ENCODE measurements at regions of chr10 and their contacts with region 1.

Region 1: DNA sequence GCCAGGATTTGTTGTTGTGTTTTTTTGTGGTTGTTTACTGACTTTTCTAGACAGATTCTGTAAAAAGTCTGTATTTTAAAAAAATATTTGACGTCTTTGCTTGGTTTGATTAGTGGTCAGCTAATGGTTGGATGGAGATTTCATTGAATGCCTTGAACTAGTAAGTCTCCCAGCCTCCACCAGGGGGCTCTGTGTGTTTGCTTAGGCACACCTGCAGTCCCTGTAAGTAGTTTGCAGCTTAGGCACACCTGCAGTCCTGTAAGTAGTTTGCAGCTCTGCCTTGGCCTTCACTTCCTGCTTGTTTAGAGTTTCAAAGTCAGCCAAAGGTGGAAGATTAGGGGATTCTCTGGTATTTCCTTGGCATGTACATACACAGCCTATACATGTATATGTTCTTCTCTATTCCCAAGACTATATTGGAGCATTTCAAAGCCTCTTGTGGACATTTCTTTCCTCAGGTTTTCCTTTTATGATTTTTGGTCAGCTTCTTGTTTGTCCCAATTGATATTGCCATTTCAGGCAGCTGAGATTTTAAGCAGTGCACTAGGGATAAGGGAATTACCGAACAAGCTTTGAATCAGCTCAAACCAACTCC is 101.6 kb downstream of the CCSER2 start:
- DNase-seq: peak; percentile 31
- ATAC-seq: peak; percentile 99
- H3K4me3 ChIP-seq: no peak overlapping the region
- H3K27ac ChIP-seq: no peak overlapping the region
- H3K4me1 ChIP-seq: no peaks in the 10 kb centered on the region
- H3K27me3 ChIP-seq: no peaks in the 10 kb centered on the region
- CTCF ChIP-seq: peak; percentile 73 to 88 (median 77)
- EP300 ChIP-seq: no peak
- POLR2A ChIP-seq: no peak
- RAD21 ChIP-seq: peak; percentile 54

Region 2: GRCh38 chr10:84264611-84265141 is 165.3 kb before region 1 on chr10:
- CTCF ChIA-PET with region 1: interaction called, 27 read pairs
- POLR2A ChIA-PET with region 1: no interaction called
- RAD21 ChIA-PET with region 1: interaction called, 6 read pairs
- SMC1A ChIA-PET with region 1: interaction called, 6 read pairs
- in situ Hi-C with region 1: no loop called
- intact Hi-C with region 1: loop called (anchors 2 kb)
- DNase-seq: no peak
- ATAC-seq: peak; percentile 94
- H3K4me3 ChIP-seq: no peak overlapping the region
- H3K27ac ChIP-seq: no peak overlapping the region
- H3K4me1 ChIP-seq: no peaks in the 10 kb centered on the region
- H3K27me3 ChIP-seq: no peaks in the 10 kb centered on the region; a peak in 2 of 4 replicates
- CTCF ChIP-seq: peak; percentile 94 to 98 (median 97)
- EP300 ChIP-seq: no peak
- POLR2A ChIP-seq: no peak
- RAD21 ChIP-seq: peak; percentile 87

Region 3: GRCh38 chr10:84360637-84361365 is 69.2 kb before region 1 on chr10:
- CTCF ChIA-PET with region 1: no interaction called
- POLR2A ChIA-PET with region 1: no interaction called
- RAD21 ChIA-PET with region 1: no interaction called
- SMC1A ChIA-PET with region 1: no interaction called
- in situ Hi-C with region 1: no loop called
- intact Hi-C with region 1: no loop called
- DNase-seq: no peak
- ATAC-seq: no peak
- H3K4me3 ChIP-seq: no peak overlapping the region
- H3K27ac ChIP-seq: no peak overlapping the region
- H3K4me1 ChIP-seq: no peaks in the 10 kb centered on the region
- H3K27me3 ChIP-seq: no peaks in the 10 kb centered on the region
- CTCF ChIP-seq: no peak
- EP300 ChIP-seq: no peak
- POLR2A ChIP-seq: no peak
- RAD21 ChIP-seq: no peak

Region 4: GRCh38 chr10:84375011-84375410 is 55.0 kb before region 1 on chr10:
- CTCF ChIA-PET with region 1: interaction called, 13 read pairs
- POLR2A ChIA-PET with region 1: no interaction called
- RAD21 ChIA-PET with region 1: interaction called, 3 read pairs
- SMC1A ChIA-PET with region 1: interaction called, 7 read pairs
- in situ Hi-C with region 1: no loop called
- intact Hi-C with region 1: loop called (anchors 5 kb)
- DNase-seq: peak; percentile 34
- ATAC-seq: peak; percentile 78
- H3K4me3 ChIP-seq: no peak overlapping the region
- H3K27ac ChIP-seq: no peak overlapping the region
- H3K4me1 ChIP-seq: no peaks in the 10 kb centered on the region
- H3K27me3 ChIP-seq: no peaks in the 10 kb centered on the region
- CTCF ChIP-seq: peak; percentile 58 to 69 (median 60)
- EP300 ChIP-seq: no peak
- POLR2A ChIP-seq: no peak
- RAD21 ChIP-seq: peak; percentile 77

Region 5: DNA sequence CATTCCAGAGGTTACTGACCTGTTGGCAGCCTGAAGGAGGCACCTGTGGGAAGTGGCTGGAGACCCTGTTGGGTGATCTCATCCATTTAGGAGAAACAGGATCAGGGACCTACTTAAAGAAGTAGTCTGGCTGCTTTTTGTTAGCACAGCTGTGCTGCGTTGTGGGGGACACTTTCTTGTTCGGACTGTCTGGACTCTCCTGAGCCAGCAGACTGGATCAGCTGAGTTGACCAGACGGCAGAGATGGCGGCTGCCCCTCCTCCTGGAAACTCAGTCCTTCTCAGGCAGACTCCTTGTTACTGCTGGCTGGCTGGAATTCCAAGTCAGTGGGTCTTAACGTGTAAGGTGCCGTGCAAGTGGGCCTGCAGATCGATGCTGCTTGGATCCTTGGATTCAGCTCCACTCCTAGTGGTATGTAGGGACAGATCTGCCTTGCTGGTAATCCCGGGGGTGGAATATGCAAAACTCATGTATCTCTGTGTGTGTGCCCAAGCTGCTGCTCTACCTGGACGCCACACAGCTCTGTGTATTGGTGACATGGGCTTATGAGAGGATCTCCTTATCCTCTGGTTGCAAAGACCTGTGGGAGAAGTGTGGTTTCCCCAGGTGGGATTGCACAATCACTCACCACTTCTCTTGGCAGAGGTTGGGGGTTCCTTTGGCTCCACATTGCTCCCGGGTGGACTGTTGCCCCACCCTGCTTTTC is 14.3 kb before region 1 on chr10:
- CTCF ChIA-PET with region 1: interaction called, 13 read pairs
- POLR2A ChIA-PET with region 1: interaction called, 3 read pairs
- RAD21 ChIA-PET with region 1: no interaction called
- SMC1A ChIA-PET with region 1: interaction called, 4 read pairs
- in situ Hi-C with region 1: no loop called
- intact Hi-C with region 1: no loop called
- DNase-seq: no peak
- ATAC-seq: no peak
- H3K4me3 ChIP-seq: no peak overlapping the region
- H3K27ac ChIP-seq: no peak overlapping the region
- H3K4me1 ChIP-seq: no peaks in the 10 kb centered on the region
- H3K27me3 ChIP-seq: no peaks in the 10 kb centered on the region
- CTCF ChIP-seq: no peak
- EP300 ChIP-seq: no peak
- POLR2A ChIP-seq: no peak
- RAD21 ChIP-seq: no peak

Region 6: DNA sequence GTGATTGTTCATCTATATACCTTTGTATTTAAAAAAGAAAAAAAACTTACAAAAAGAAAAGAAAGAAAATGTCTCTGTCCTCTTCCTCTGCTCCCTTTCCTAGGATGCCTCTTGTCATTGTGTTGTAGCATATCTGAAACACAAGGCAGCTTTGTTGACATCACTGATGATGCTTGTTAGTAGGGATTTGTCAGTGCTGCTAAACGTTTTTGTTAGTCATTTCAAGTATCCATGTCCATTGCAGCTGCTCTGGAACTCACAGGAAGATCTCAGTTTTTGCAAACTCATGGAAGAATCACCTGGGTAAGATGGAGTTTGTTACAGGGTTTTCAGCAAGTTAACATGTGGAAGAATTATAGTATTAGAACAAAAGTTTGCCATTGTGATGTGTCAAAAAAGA is 22.0 kb after region 1 on chr10:
- CTCF ChIA-PET with region 1: interaction called, 14 read pairs
- POLR2A ChIA-PET with region 1: no interaction called
- RAD21 ChIA-PET with region 1: no interaction called
- SMC1A ChIA-PET with region 1: no interaction called
- in situ Hi-C with region 1: no loop called
- intact Hi-C with region 1: no loop called
- DNase-seq: no peak
- ATAC-seq: no peak
- H3K4me3 ChIP-seq: no peak overlapping the region
- H3K27ac ChIP-seq: no peak overlapping the region
- H3K4me1 ChIP-seq: no peaks in the 10 kb centered on the region
- H3K27me3 ChIP-seq: no peaks in the 10 kb centered on the region
- CTCF ChIP-seq: no peak
- EP300 ChIP-seq: no peak
- POLR2A ChIP-seq: no peak
- RAD21 ChIP-seq: no peak